ENCODE measurements at regions of chr1 and their contacts with region 1.

Region 1: DNA sequence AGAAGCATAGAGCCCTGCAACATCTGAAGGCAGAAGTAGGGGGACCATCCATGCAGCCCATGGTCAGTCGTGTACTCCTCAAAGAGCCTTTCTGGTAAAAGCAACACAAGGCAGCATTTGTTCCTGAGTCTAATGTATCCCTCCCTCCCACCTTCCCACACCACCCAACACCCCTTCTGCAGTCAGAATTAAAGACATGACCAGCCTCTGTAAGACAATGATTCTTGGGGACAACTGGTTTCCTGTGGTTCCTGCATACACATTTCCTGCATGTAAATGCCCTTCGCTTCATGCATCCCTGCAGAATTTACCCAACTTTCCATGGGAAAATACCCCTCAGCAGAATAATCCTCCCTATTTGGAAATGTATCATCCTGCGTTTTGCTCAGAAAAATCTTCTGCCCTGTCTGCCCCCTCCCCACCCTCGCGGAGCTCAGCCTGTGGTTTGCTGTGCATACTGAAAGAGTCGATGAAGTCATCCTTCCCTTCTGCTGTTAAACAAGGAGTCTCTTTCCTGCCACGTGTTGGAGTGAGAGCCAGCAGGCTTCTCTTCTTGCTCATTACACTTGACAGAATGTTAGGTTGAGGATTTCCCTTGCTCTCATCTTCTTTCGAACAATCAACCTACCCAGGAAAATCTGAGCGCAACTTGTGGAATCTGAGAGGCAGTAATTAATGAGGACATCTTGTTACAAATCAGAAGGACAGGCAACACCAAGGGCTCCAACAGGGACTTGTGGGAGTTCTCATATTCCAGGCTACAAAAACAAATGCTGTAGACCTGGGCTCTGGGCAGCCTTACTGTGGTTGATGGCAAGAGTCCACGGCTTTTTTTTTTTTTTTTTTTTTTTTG is 4.7 kb downstream of the TNN start:
- DNase-seq: peak in 4 of 5 donors; percentile 44 to 62 (median 48)
- ATAC-seq: peak; percentile 58 to 89 (median 79)
- H3K4me3 ChIP-seq: peak overlapping the region in 6 of 12 donors; percentile 0 to 40 (median 26)
- H3K27ac ChIP-seq: peak overlapping the region in 8 of 12 donors; percentile 1 to 57 (median 36)
- H3K4me1 ChIP-seq: peaks cover 0 to 29% (median 8%) of the 10 kb centered on the region in 12 donors
- H3K27me3 ChIP-seq: peaks cover 0 to 12% (median 0%) of the 10 kb centered on the region in 9 donors
- CTCF ChIP-seq: no peak
- POLR2A ChIP-seq: no peak

Region 2: GRCh38 chr1:175124861-175125260 is 52.5 kb after region 1 on chr1:
- intact Hi-C with region 1: loop called in 1 of 10 experiments (anchors 5 kb)
- DNase-seq: no peak
- ATAC-seq: no peak
- H3K4me3 ChIP-seq: no peak overlapping the region
- H3K27ac ChIP-seq: peak overlapping the region in 10 of 12 donors; percentile 17 to 65 (median 44)
- H3K4me1 ChIP-seq: peaks cover 0 to 35% (median 20%) of the 10 kb centered on the region in 12 donors
- H3K27me3 ChIP-seq: no peaks in the 10 kb centered on the region
- CTCF ChIP-seq: no peak
- POLR2A ChIP-seq: no peak